WTC11 (cell line): ENCODE measurements at regions of chr22 and their contacts with region 1.

Region 1: GRCh38 chr22:25772288-25772687 is 30.3 kb downstream of the MYO18B start:
- DNase-seq: no peak
- ATAC-seq: no peak
- H3K4me3 Mint-ChIP-seq: no peak overlapping the region
- H3K27ac Mint-ChIP-seq: no peak overlapping the region
- H3K4me1 Mint-ChIP-seq: peaks cover 4% of the 10 kb centered on the region
- H3K27me3 Mint-ChIP-seq: peaks cover 2% of the 10 kb centered on the region
- CTCF ChIP-seq: no peak

Region 2: GRCh38 chr22:25202290-25202921 is 569.9 kb before region 1 on chr22:
- CTCF ChIA-PET with region 1: interaction called, 16 read pairs
- POLR2A ChIA-PET with region 1: no interaction called
- DNase-seq: peak; percentile 86
- ATAC-seq: peak; percentile 94
- H3K4me3 Mint-ChIP-seq: no peak overlapping the region
- H3K27ac Mint-ChIP-seq: no peak overlapping the region
- H3K4me1 Mint-ChIP-seq: no peaks in the 10 kb centered on the region
- H3K27me3 Mint-ChIP-seq: no peaks in the 10 kb centered on the region
- CTCF ChIP-seq: peak; percentile 76

Region 3: GRCh38 chr22:25465949-25466348 is 306.3 kb before region 1 on chr22:
- CTCF ChIA-PET with region 1: interaction called, 44 read pairs
- POLR2A ChIA-PET with region 1: no interaction called
- DNase-seq: no peak
- ATAC-seq: no peak
- H3K4me3 Mint-ChIP-seq: no peak overlapping the region
- H3K27ac Mint-ChIP-seq: no peak overlapping the region
- H3K4me1 Mint-ChIP-seq: peaks cover 3% of the 10 kb centered on the region; the same call in 1 of the 2 replicates
- H3K27me3 Mint-ChIP-seq: no peaks in the 10 kb centered on the region
- CTCF ChIP-seq: no peak

Region 4: GRCh38 chr22:25762147-25762546 is 10.1 kb before region 1 on chr22:
- CTCF ChIA-PET with region 1: interaction called, 11 read pairs
- POLR2A ChIA-PET with region 1: no interaction called
- DNase-seq: no peak
- ATAC-seq: no peak
- H3K4me3 Mint-ChIP-seq: no peak overlapping the region
- H3K27ac Mint-ChIP-seq: no peak overlapping the region
- H3K4me1 Mint-ChIP-seq: no peaks in the 10 kb centered on the region
- H3K27me3 Mint-ChIP-seq: no peaks in the 10 kb centered on the region; the same call in 1 of the 2 replicates
- CTCF ChIP-seq: no peak

Region 5: DNA sequence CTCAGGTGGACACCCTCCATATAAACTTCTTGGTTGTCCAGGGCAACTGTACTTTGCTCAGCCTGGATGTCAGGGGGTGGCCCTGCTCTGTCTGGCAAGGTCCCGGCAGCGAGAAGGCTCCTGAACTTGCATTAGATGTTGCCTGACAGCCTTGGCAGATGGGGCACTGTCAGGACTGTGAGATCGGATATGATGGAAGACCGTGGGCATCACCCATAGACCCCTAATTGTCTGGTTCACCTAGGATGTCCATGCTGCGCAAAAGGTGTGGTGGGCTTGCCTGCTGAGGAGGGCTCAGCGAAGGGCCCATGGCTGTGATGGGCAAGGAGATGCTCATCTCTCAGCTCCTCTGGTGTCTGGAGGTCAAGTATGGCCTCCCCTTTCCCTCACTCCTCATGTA is 32.4 kb after region 1 on chr22:
- CTCF ChIA-PET with region 1: interaction called, 14 read pairs
- POLR2A ChIA-PET with region 1: no interaction called
- DNase-seq: no peak
- ATAC-seq: no peak
- H3K4me3 Mint-ChIP-seq: no peak overlapping the region
- H3K27ac Mint-ChIP-seq: no peak overlapping the region
- H3K4me1 Mint-ChIP-seq: no peaks in the 10 kb centered on the region
- H3K27me3 Mint-ChIP-seq: peaks cover 6% of the 10 kb centered on the region; the same call in 1 of the 2 replicates
- CTCF ChIP-seq: no peak

Region 6: DNA sequence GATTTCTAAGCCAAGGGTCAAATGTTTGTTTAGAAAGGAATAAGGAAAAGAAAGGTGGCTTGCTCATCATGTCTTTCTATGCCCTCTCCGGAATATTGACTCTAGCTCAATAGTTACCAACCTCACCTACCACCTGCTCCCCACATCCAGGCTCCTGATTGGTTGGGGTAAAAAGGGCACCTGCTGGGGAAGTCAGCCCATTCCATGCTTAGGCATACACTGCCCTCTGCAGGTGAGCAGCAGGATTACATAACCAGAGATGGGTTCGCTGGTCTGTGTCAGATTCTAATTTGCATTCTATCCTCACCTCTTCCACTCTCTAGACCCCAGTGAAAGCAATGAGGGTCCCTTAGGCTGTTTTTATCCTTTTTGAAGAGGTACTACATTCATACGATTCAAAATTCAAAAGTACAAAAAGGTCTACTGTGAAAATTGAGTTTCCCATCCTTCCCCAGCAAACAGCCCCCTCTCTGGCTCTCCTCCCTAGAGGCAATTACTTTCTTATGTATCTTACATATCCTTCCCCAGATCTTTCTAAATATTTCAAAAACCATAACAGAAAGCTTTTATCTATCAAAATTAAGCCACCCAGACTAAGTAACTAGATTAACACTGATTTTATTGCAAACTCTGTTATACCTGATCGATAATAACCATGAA is 558.8 kb after region 1 on chr22:
- CTCF ChIA-PET with region 1: interaction called, 17 read pairs
- POLR2A ChIA-PET with region 1: no interaction called
- DNase-seq: peak; percentile 81
- ATAC-seq: peak; percentile 94
- H3K4me3 Mint-ChIP-seq: no peak overlapping the region
- H3K27ac Mint-ChIP-seq: no peak overlapping the region
- H3K4me1 Mint-ChIP-seq: no peaks in the 10 kb centered on the region
- H3K27me3 Mint-ChIP-seq: peaks cover 23% of the 10 kb centered on the region
- CTCF ChIP-seq: peak; percentile 93